HAP-1 (cell line): ENCODE measurements at regions of chr12 and their contacts with region 1.

Region 1: GRCh38 chr12:32659908-32660440 is 19.1 kb upstream of the DNM1L start:
- DNase-seq: no peak
- H3K4me3 ChIP-seq: no peak overlapping the region
- H3K4me1 ChIP-seq: no peaks in the 10 kb centered on the region
- H3K27me3 ChIP-seq: no peaks in the 10 kb centered on the region

Region 2: DNA sequence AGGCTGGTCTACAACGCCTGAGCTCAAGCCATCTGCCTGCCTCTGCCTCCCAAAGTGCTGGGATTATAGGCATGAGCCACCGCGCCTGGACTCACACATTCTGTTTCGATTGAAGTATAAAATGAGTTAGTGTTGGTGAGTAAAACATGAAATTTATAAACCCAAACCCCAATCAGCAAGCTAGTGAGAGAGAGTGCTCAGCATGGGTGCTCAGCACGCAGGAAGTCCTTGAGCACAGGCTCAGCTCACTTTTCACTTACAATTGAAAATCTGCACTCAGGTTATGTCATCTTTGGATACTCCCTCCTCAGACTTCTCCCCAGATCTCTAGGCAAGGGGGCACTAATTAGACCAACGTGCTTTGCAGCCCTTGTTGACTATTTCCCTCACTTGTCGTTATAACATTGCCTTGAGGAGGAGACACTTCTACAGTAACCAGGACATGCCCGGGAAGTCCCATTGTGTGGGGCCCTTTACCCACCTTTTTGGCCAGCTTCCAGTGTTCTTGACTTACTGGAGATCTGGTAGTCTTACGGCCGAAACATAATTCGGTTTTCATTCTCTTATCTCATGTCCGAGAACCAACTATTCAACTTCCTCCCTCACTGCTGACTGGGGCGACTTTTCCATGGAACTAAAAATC is 862.6 kb before region 1 on chr12:
- in situ Hi-C with region 1: no loop called
- DNase-seq: no peak
- H3K4me3 ChIP-seq: no peak overlapping the region
- H3K4me1 ChIP-seq: no peaks in the 10 kb centered on the region
- H3K27me3 ChIP-seq: no peaks in the 10 kb centered on the region

Region 3: DNA sequence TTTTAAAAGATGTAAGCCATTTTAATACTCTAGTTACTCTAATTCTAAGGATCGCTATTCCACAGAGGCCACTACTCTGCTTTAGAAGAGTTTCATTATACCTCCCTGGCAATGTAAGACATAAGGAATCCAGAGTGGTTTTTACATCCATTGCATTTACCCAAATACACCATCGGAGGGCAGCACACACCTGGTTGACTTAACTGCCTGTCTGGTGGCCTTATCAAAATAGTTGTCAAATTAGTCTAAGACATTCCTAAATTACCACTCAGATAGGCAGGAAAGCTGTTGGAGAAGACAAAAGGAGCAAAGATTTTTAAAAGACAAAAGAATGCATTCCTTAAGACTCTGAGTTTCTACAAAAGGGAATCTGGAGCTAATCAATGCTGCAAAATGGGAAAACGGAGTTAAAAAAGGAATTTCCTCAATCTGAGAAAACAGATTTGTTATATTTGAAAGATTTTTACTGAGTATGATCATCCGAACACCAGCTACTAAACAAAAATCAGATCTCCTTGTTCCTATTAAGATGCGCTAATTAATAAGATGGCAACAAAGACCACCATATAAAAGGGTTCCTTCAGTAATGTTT is 294.4 kb before region 1 on chr12:
- in situ Hi-C with region 1: loop called (anchors 10 kb)
- DNase-seq: peak; percentile 77 to 79
- H3K4me3 ChIP-seq: no peak overlapping the region
- H3K4me1 ChIP-seq: peaks cover 7% of the 10 kb centered on the region
- H3K27me3 ChIP-seq: no peaks in the 10 kb centered on the region

Region 4: DNA sequence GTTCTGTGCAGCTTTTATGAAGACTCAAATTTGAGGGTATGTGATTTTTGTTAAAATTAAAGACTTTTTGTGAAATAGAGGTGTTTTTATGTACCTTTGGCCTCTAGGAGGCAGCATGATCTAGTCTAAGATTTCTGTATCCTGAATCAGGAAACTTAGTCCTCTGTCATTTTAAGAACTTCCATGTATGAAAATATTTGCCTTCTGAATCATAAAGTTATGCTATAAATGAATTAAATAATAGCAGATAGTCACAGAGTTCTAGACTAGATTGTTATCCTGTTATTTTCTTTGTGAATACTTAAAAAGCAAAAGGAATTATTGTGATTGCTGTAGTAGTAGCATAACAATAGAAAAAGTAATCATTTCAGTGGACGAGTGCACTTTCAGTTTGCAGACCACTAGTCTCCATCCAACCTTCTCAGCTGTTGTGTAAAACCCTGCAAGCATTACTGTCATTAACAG is 204.3 kb before region 1 on chr12:
- in situ Hi-C with region 1: loop called (anchors 10 kb)
- DNase-seq: peak; percentile 16 to 60
- H3K4me3 ChIP-seq: no peak overlapping the region
- H3K4me1 ChIP-seq: peaks cover 32% of the 10 kb centered on the region
- H3K27me3 ChIP-seq: no peaks in the 10 kb centered on the region

Region 5: DNA sequence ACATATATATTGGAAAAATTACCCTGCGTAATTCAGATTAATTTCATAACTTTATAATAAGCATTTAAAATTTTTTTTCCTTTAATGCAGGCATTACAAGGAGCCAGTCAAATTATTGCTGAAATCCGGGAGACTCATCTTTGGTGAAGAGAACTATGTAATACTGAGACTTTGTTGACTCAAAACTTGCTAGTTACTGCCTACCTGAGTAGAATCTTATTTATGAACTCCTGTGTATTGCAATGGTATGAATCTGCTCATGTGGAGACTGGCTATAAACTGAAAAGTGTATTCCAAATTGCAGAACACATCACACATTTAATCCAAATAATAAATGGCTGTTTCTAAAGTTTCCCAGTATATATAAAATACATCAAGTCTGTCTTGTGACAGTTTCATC is 83.3 kb after region 1 on chr12:
- in situ Hi-C with region 1: no loop called
- DNase-seq: no peak
- H3K4me3 ChIP-seq: no peak overlapping the region
- H3K4me1 ChIP-seq: peaks cover 16% of the 10 kb centered on the region
- H3K27me3 ChIP-seq: no peaks in the 10 kb centered on the region